ENCODE measurements at regions of chr15 and their contacts with region 1.

Region 1: GRCh38 chr15:32956006-32956405 is 238.2 kb downstream of the GREM1 start:
- DNase-seq: no peak
- ATAC-seq: peak in 1 of 4 donors; percentile 29
- H3K4me3 ChIP-seq: no peak overlapping the region
- H3K27ac ChIP-seq: no peak overlapping the region
- H3K4me1 ChIP-seq: peaks cover 0 to 11% (median 0%) of the 10 kb centered on the region in 12 donors
- H3K27me3 ChIP-seq: no peaks in the 10 kb centered on the region
- CTCF ChIP-seq: peak in 8 of 12 donors; percentile 11 to 48 (median 32)
- POLR2A ChIP-seq: no peak

Region 2: DNA sequence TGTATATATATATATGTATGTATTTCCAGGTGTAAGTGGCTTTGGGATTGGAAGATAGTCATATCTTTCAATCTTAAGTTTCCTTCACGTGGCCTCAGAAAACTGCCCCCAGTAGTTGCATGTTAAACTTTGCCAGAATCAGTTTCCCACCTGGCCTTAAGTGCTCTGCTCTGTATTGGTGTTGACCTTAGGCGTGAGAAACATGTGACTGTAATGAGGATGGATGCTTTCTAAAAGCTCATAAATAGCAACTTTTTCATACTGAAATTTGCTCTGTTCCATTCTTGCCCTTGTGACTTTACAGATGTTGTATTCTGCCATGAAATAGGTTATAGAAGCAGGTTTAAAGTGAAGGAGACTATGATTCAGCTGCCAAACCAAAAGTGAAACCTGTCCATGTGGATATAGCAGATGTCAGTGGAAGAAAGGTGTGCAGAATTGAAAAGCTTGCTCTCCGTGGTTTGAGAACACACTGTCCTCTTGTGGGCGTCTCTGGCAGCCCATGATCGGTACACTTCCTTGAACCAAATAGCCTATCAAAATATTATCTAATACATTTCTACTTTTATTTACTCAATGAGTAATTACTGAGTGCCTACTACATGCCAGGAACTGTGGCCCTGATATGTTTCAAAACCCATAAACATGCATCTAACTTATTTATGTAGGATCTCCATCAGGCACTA is 298.7 kb before region 1 on chr15:
- intact Hi-C with region 1: loop called in 3 of 10 experiments (anchors 10 kb)
- DNase-seq: no peak
- ATAC-seq: no peak
- H3K4me3 ChIP-seq: no peak overlapping the region
- H3K27ac ChIP-seq: no peak overlapping the region
- H3K4me1 ChIP-seq: peaks cover 0 to 3% (median 0%) of the 10 kb centered on the region in 12 donors
- H3K27me3 ChIP-seq: no peaks in the 10 kb centered on the region
- CTCF ChIP-seq: no peak
- POLR2A ChIP-seq: no peak

Region 3: DNA sequence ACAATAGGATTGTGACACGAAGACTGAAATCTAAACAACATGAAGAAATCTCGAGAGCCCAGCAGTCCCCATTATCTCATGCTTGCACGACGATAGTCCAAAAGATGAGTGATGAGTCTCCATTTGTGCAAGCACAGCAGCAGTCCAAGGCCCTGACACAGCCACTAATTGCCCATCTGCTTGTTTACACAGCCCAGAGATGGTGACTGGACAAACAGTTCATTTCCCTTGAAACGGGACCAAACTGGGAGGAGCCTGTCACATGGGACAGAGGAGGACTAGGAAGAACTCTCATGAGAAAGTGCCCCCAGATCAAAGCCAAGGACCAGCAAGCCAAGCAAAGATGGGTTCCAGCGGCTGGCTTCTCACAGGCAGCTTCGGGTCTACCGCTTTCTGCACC is 117.2 kb before region 1 on chr15:
- intact Hi-C with region 1: loop called in 2 of 10 experiments (anchors 10 kb)
- DNase-seq: no peak
- ATAC-seq: peak in 1 of 4 donors; percentile 34
- H3K4me3 ChIP-seq: no peak overlapping the region
- H3K27ac ChIP-seq: no peak overlapping the region
- H3K4me1 ChIP-seq: no peaks in the 10 kb centered on the region
- H3K27me3 ChIP-seq: peaks cover 0 to 10% (median 0%) of the 10 kb centered on the region in 9 donors
- CTCF ChIP-seq: no peak
- POLR2A ChIP-seq: no peak

Region 4: DNA sequence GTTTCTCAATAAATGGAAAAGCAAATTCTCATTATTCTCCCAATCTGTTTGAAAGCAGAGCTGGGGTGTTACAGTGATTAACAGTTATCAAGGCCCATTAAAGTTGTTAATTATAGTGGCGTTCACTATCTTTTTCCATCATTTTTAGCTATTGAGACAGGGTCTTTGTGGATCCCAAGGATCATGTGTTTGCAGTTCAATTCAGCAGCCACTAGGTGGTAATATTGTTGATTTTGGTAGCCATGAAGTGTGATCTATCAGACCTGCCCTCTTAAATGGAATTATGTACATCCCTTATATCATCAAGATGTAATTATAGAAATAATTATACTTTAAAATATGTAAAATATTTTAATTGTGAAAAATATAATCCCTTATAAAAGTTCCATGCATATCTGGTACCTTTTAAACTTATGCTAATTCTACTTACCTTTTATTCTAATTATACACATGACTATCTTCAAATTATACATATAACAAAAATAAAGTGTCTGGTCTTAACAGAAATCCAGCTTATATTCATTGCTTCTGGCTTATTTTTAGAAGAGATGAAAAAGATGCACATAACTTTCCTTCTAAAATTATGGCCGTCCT is 111.8 kb before region 1 on chr15:
- intact Hi-C with region 1: loop called in 2 of 10 experiments (anchors 10 kb)
- DNase-seq: no peak
- ATAC-seq: no peak
- H3K4me3 ChIP-seq: no peak overlapping the region
- H3K27ac ChIP-seq: no peak overlapping the region
- H3K4me1 ChIP-seq: no peaks in the 10 kb centered on the region
- H3K27me3 ChIP-seq: peaks cover 0 to under 1% (median 0%) of the 10 kb centered on the region in 9 donors
- CTCF ChIP-seq: peak; percentile 27 to 66 (median 50)
- POLR2A ChIP-seq: no peak

Region 5: DNA sequence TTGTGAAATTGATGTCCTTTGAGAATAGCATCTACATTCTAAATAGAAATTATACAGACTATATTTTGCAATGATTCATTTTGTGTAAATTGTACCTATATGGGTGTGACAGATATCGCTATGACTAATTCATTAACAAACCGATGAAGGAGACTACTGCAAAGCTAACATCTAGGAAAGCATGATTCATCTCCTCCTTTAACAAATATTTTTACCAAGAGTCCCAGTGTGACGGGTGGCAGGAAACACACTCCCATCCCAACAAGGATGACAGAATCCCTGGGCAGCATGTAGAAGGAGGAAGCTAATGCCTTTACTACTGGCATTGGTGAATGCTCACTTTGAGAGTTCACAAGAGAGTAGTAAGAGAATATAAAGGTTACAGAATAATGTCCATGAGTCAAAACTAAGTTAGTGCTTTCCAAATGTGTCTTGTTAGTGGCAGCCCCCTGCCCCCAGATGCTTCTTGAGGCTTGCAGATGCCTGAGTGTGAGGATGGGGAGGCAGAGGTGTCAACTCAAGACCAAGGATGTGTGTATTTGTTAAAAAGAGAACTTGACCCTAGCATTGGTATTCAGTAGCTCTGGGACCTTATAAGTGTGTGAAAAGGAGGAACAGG is 57.9 kb after region 1 on chr15:
- intact Hi-C with region 1: loop called in 1 of 10 experiments (anchors 10 kb)
- DNase-seq: no peak
- ATAC-seq: no peak
- H3K4me3 ChIP-seq: no peak overlapping the region
- H3K27ac ChIP-seq: no peak overlapping the region
- H3K4me1 ChIP-seq: peaks cover 0 to 3% (median 0%) of the 10 kb centered on the region in 12 donors
- H3K27me3 ChIP-seq: no peaks in the 10 kb centered on the region
- CTCF ChIP-seq: no peak
- POLR2A ChIP-seq: no peak

Region 6: DNA sequence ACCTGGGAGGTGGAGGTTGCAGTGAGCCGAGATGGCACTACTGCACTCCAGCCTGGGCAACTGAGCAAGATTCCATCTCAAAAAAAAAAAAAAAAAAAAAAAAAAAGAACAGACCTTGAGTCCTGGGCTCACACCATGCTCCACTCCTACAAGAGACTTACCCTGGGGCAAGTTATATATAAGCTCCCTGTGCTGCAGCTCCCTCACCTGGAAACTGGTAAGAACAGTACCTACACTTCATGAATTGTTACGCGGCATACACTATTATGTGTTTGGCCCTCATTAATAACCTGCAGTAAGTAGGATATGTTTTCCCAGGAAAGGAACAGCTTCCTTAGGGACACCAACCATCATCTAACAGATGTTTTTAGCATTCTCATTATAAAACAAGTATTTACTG is 118.9 kb after region 1 on chr15:
- intact Hi-C with region 1: no loop called
- DNase-seq: no peak
- ATAC-seq: peak in 3 of 4 donors; percentile 37 to 52 (median 51)
- H3K4me3 ChIP-seq: no peak overlapping the region
- H3K27ac ChIP-seq: no peak overlapping the region
- H3K4me1 ChIP-seq: no peaks in the 10 kb centered on the region
- H3K27me3 ChIP-seq: no peaks in the 10 kb centered on the region
- CTCF ChIP-seq: no peak
- POLR2A ChIP-seq: no peak

Measured in heart left ventricle (tissue), 16 donors.